CD4-positive, alpha-beta T cell (primary cell): ENCODE measurements at regions of chr22 and their contacts with region 1.

Region 1: GRCh38 chr22:20981787-20982562 is at the start of gene LZTR1:
- DNase-seq: peak; percentile 40 to 85 (median 66)
- ATAC-seq: peak; percentile 58
- H3K4me3 ChIP-seq: peak within 1 kb of the TSS; percentile 76
- H3K4me3 Mint-ChIP-seq: peak within 1 kb of the TSS; percentile 97
- H3K27ac ChIP-seq: peak within 1 kb of the TSS; percentile 69 to 80
- H3K27ac Mint-ChIP-seq: peak within 1 kb of the TSS; percentile 87
- H3K4me1 ChIP-seq: peaks cover 49% of the 10 kb centered on the region
- H3K4me1 Mint-ChIP-seq: peaks cover 48% of the 10 kb centered on the region
- H3K27me3 ChIP-seq: no peaks in the 10 kb centered on the region
- H3K27me3 Mint-ChIP-seq: no peaks in the 10 kb centered on the region
- CTCF ChIP-seq: peak; percentile 52
- total RNA-seq, gene LZTR1: 48.4 to 51.3 TPM

Region 2: GRCh38 chr22:20671409-20672081 is 310.4 kb before region 1 on chr22:
- CTCF ChIA-PET with region 1: no interaction called
- POLR2A ChIA-PET with region 1: no interaction called
- intact Hi-C with region 1: no loop called
- DNase-seq: no peak
- ATAC-seq: no peak
- H3K4me3 ChIP-seq: no peak overlapping the region
- H3K4me3 Mint-ChIP-seq: no peak overlapping the region
- H3K27ac ChIP-seq: no peak overlapping the region
- H3K27ac Mint-ChIP-seq: no peak overlapping the region
- H3K4me1 ChIP-seq: no peaks in the 10 kb centered on the region
- H3K4me1 Mint-ChIP-seq: no peaks in the 10 kb centered on the region
- H3K27me3 ChIP-seq: peaks cover 6 to 11% of the 10 kb centered on the region in 2 experiments
- H3K27me3 Mint-ChIP-seq: peaks cover 36% of the 10 kb centered on the region
- CTCF ChIP-seq: no peak

Region 3: GRCh38 chr22:21001560-21002325 is 19.8 kb after region 1 on chr22 and contains the start of gene THAP7:
- CTCF ChIA-PET with region 1: interaction called, 7 read pairs
- POLR2A ChIA-PET with region 1: interaction called, 25 read pairs
- intact Hi-C with region 1: loop called (anchors 1 kb)
- DNase-seq: peak; percentile 94 to 99 (median 96)
- ATAC-seq: peak; percentile 87
- H3K4me3 ChIP-seq: peak within 1 kb of the TSS; percentile 82
- H3K4me3 Mint-ChIP-seq: peak within 1 kb of the TSS; percentile 93
- H3K27ac ChIP-seq: peak within 1 kb of the TSS; percentile 96 to 100
- H3K27ac Mint-ChIP-seq: peak within 1 kb of the TSS; percentile 97
- H3K4me1 ChIP-seq: peaks cover 54% of the 10 kb centered on the region
- H3K4me1 Mint-ChIP-seq: peaks cover 46% of the 10 kb centered on the region
- H3K27me3 ChIP-seq: no peaks in the 10 kb centered on the region
- H3K27me3 Mint-ChIP-seq: no peaks in the 10 kb centered on the region
- CTCF ChIP-seq: no peak
- total RNA-seq, gene THAP7: 82.7 to 84.0 TPM

Region 4: DNA sequence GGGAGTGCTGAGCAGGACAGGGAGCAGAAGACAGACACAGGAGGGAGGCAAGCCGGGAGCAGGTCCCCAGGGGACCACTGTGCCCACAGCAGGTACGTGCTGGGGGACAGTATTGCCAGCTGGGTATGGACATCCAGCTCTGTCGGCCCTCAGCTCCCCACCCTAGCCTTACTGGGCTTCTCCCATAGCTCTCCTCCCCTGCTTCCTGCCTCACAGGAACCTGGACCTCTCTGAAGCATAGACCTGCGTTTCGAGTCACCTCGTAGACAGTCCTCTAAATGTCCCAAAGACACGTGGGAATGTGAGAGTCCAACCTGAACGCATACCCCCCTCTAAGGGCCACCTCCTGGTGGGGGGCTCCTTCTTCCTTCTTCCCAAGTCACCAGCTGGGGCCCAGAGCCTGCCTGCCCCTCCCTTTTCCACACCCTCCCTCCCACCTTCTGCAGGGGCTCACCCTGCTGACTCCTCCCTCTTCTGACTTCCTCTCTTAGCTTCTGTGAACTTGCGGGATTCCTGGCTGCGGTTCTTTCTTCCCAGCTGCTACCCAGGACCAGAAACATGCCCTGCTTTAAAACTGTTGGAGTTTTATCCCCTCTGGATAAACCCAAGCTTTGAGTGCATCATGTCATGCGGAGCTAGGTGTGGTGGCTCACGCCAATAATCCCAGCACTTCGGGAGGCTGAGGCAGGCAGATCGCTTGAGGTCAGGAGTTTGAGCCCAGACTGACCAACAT is 73.8 kb after region 1 on chr22:
- CTCF ChIA-PET with region 1: no interaction called
- POLR2A ChIA-PET with region 1: no interaction called
- intact Hi-C with region 1: no loop called
- DNase-seq: peak in 2 of 14 experiments; percentile 9 to 21
- ATAC-seq: peak; percentile 44
- H3K4me3 ChIP-seq: no peak overlapping the region
- H3K4me3 Mint-ChIP-seq: peak overlapping the region; percentile 48
- H3K27ac ChIP-seq: no peak overlapping the region
- H3K27ac Mint-ChIP-seq: no peak overlapping the region
- H3K4me1 ChIP-seq: peaks cover 18% of the 10 kb centered on the region
- H3K4me1 Mint-ChIP-seq: peaks cover 15% of the 10 kb centered on the region
- H3K27me3 ChIP-seq: no peaks in the 10 kb centered on the region
- H3K27me3 Mint-ChIP-seq: no peaks in the 10 kb centered on the region
- CTCF ChIP-seq: no peak

Region 5: DNA sequence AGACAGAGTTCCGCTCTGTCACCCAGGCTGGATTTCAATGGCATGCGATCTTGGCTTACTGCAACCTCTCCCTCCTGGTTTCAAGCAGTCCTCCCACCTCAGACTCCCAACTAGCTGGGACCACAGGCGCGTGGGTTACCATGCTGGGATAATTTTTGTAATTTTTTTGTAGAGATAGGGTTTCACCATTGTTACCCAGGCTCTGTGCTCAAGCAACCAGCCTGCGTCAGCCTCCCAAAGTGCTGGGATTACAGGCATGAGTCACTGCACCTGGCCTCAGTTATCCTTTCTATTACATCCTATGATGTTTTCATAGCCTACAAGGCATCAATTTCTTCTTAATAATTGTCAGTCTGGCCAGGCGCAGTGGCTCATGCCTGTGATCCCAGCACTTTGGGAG is 100.3 kb after region 1 on chr22:
- CTCF ChIA-PET with region 1: no interaction called
- POLR2A ChIA-PET with region 1: no interaction called
- intact Hi-C with region 1: no loop called
- DNase-seq: no peak
- ATAC-seq: no peak
- H3K4me3 ChIP-seq: no peak overlapping the region
- H3K4me3 Mint-ChIP-seq: no peak overlapping the region
- H3K27ac ChIP-seq: no peak overlapping the region
- H3K27ac Mint-ChIP-seq: no peak overlapping the region
- H3K4me1 ChIP-seq: no peaks in the 10 kb centered on the region
- H3K4me1 Mint-ChIP-seq: no peaks in the 10 kb centered on the region
- H3K27me3 ChIP-seq: no peaks in the 10 kb centered on the region
- H3K27me3 Mint-ChIP-seq: peaks cover 3% of the 10 kb centered on the region
- CTCF ChIP-seq: no peak

Region 6: DNA sequence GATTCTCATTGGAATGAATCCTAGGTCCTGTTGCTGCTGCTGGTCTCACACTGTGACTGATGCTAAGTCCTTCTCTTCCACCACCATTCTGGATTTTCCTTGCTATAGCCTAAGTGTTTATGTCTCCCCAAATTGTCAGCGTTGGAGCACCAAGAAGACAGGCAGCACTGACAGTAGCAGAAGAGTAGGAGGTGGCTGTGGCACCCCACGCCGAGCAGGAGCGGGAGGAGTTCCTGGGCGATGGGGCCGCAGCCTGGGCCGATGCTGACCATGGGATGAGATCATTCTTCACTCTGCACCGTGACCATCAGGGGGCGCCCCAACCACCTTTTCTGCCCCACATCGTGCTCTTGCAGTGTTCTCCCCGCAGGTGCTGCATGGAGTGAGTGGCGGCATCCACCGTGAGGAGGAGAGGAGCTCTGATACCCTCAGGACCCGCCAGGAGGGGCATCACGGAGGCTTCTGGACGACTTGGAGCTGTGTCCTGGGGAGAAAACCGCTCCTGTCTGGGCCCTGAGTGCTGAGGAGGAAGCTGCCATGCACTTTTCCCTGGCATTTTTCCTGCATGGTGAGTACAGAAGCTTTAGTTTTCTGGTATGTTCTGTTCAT is 120.8 kb after region 1 on chr22:
- CTCF ChIA-PET with region 1: no interaction called
- POLR2A ChIA-PET with region 1: no interaction called
- intact Hi-C with region 1: loop called in 1 of 2 experiments (anchors 10 kb)
- DNase-seq: peak; percentile 58 to 84 (median 66)
- ATAC-seq: peak; percentile 89
- H3K4me3 ChIP-seq: no peak overlapping the region
- H3K4me3 Mint-ChIP-seq: no peak overlapping the region
- H3K27ac ChIP-seq: no peak overlapping the region
- H3K27ac Mint-ChIP-seq: no peak overlapping the region
- H3K4me1 ChIP-seq: peaks cover 6% of the 10 kb centered on the region
- H3K4me1 Mint-ChIP-seq: peaks cover 8% of the 10 kb centered on the region
- H3K27me3 ChIP-seq: peaks cover 9 to 11% of the 10 kb centered on the region in 2 experiments
- H3K27me3 Mint-ChIP-seq: peaks cover 44% of the 10 kb centered on the region
- CTCF ChIP-seq: peak; percentile 82